ENCODE measurements at regions of chrX and their contacts with region 1.

Region 1: DNA sequence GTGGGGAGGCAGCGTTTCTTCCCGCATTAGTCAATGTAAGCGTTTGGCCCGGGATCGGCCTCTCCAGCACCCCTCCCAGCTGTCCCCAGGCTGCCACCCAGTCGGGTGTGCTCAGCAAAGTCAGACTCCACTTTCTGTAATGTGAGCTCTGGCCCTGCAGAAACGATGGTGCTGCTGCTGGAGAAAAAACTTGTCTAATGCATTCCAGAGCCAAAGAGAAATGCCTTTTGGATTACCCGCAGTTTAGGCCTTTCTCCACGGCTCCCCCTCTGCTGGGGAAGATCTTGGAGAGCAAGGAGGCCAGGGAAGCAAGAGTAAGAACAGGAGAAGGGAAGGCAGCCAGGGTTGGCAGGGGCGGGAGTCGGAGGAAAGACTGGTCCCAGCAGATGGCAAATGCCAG is 55.2 kb downstream of the ELF4 start:
- DNase-seq: no peak
- H3K4me3 ChIP-seq: no peak overlapping the region
- H3K27ac ChIP-seq: peak overlapping the region in 1 of 5 donors; percentile 16
- H3K4me1 ChIP-seq: no peaks in the 10 kb centered on the region
- H3K27me3 ChIP-seq: peaks cover 8% of the 10 kb centered on the region
- CTCF ChIP-seq: no peak
- POLR2A ChIP-seq: no peak

Region 2: GRCh38 chrX:129925305-129926092 is 129.6 kb before region 1 on chrX:
- intact Hi-C with region 1: loop called in 1 of 2 experiments (anchors 10 kb)
- DNase-seq: peak; percentile 68 to 91 (median 75)
- H3K4me3 ChIP-seq: no peak overlapping the region
- H3K27ac ChIP-seq: peak overlapping the region in 1 of 5 donors; percentile 68
- H3K4me1 ChIP-seq: no peaks in the 10 kb centered on the region
- H3K27me3 ChIP-seq: no peaks in the 10 kb centered on the region
- CTCF ChIP-seq: peak; percentile 47 to 79 (median 66)
- POLR2A ChIP-seq: peak in 1 of 2 donors; percentile 20

Measured in adrenal gland (tissue), 19 donors.